ENCODE measurements at regions of chr1 and their contacts with region 1.

Region 1: DNA sequence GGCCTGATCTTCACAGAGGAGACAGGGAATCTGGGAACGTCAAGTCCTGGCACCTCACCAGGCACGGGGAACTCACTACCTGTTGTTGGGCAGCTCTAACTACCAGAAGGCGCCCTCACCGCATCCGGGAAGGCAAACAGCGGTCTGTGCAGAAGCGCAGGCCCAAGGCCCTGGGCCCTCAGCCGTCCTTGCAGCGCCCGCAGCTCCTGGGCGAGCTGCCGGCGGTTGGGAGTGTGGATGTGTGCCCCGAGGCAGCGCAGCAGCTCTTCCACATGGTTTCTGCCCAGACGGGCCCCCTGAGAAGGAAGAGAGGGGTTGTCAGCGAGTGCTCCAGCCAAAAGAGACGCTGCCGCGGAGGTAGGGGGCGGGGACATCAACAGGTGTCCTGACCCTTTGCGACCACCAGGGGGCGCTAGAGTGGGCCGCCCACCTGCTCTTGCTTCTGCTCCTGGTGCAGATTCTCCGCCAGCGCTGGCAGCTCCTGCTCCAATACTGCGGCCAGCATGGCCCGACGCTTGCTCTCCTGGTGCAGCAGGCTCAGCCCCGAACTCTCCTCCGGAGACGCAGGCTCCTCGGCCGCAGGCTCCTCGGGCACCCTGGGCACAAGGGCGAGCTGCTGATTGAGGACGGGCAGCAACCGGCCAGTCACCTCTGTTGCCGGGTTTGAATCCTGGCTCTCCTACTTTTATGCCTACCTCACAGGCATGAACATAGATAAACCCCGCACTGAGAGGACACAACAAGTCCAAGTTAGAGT is 9.3 kb downstream of the MAP3K6 start:
- DNase-seq: peak; percentile 80
- ATAC-seq: peak; percentile 66
- H3K4me3 Mint-ChIP-seq: peak overlapping the region; percentile 76
- H3K27ac Mint-ChIP-seq: peak overlapping the region; percentile 56
- H3K4me1 Mint-ChIP-seq: peaks cover 46% of the 10 kb centered on the region
- H3K27me3 Mint-ChIP-seq: no peaks in the 10 kb centered on the region
- CTCF ChIP-seq: peak; percentile 69

Region 2: DNA sequence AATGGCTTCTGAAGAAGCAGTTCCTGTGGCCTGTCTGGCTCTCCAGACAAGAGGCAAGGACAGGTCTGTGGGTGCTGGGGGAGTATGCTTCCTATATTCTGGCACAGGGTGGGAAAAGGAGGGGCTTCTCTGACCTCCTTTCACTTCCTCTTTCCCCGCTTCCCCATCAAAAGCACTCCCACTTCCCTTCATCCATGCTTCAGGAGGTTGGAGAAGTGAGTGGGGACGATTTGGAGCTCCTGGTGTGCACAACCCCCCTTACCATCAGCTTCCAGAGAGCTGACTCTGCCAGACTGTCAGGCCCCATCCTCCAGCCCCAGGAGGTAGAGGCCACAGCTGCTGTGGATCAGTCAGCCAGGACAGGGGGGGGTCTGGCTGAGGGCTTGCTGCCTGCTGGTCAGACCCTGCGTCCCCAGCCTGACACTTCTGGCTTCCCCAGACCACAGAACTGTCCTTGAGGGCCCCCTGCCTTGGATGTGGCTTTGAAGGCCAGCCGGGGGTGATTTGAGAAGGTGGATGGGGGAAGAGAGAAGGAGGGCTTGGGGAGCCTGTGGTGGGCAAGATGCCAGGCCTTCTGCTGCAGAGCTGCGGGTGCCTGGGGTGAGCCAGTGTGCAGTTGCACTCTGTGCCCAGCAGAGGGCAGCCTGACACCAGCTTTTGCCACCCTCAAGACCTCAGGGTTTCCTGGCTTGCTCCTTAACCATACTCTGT is 57.0 kb before region 1 on chr1:
- CTCF ChIA-PET with region 1: interaction called, 9 read pairs
- POLR2A ChIA-PET with region 1: no interaction called
- intact Hi-C with region 1: loop called (anchors 1 kb)
- DNase-seq: peak; percentile 72
- ATAC-seq: peak; percentile 90
- H3K4me3 Mint-ChIP-seq: no peak overlapping the region
- H3K27ac Mint-ChIP-seq: no peak overlapping the region
- H3K4me1 Mint-ChIP-seq: peaks cover 3% of the 10 kb centered on the region
- H3K27me3 Mint-ChIP-seq: no peaks in the 10 kb centered on the region
- CTCF ChIP-seq: peak; percentile 99

Region 3: GRCh38 chr1:27332536-27333281 is 24.8 kb before region 1 on chr1:
- CTCF ChIA-PET with region 1: interaction called, 20 read pairs
- POLR2A ChIA-PET with region 1: interaction called, 8 read pairs
- intact Hi-C with region 1: loop called (anchors 2 kb)
- DNase-seq: peak; percentile 49
- ATAC-seq: peak; percentile 92
- H3K4me3 Mint-ChIP-seq: no peak overlapping the region
- H3K27ac Mint-ChIP-seq: no peak overlapping the region
- H3K4me1 Mint-ChIP-seq: peaks cover 34% of the 10 kb centered on the region
- H3K27me3 Mint-ChIP-seq: no peaks in the 10 kb centered on the region
- CTCF ChIP-seq: no peak

Region 4: GRCh38 chr1:27372808-27373690 is 15.6 kb after region 1 on chr1:
- CTCF ChIA-PET with region 1: interaction called, 6 read pairs
- POLR2A ChIA-PET with region 1: interaction called, 6 read pairs
- intact Hi-C with region 1: loop called (anchors 1 kb)
- DNase-seq: no peak
- ATAC-seq: no peak
- H3K4me3 Mint-ChIP-seq: no peak overlapping the region
- H3K27ac Mint-ChIP-seq: no peak overlapping the region
- H3K4me1 Mint-ChIP-seq: peaks cover 40% of the 10 kb centered on the region
- H3K27me3 Mint-ChIP-seq: no peaks in the 10 kb centered on the region
- CTCF ChIP-seq: no peak

Region 5: DNA sequence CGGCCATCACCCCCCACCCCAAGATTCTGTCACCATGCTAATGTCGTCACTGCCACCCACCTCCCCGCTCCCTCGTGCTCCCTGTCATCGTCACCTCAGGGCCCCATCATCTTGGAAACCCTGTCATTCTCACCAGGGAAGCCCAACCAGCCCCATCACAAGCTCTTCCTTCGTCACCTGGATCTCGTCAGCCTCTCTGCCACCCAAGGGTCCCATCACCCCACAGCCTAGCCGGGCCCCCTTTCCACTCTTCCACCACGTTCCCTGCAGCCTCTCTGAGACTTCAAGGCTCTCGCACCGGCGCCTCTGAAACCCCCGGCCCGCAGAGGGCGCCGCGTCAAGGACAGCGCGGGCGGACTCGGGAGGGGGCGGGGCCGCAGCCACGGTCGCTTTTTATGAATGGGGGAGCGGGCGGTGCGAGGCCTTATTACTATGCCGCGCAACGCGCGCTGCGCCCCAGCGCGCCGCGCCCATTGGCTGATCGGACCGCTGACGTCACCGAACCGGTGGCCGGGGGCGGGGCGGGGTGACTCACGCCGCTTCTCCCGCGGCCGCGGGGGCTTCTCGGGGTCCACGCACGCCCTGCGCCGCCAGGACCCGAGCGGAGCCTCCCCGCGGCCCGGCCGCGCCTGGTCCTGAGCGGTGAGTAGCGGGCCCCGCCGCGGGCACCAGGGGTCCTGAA is 34.8 kb after region 1 on chr1 and contains the start of gene GPR3:
- CTCF ChIA-PET with region 1: interaction called, 43 read pairs
- POLR2A ChIA-PET with region 1: no interaction called
- intact Hi-C with region 1: loop called (anchors 1 kb)
- DNase-seq: peak; percentile 91
- ATAC-seq: peak; percentile 91
- H3K4me3 Mint-ChIP-seq: peak within 1 kb of the TSS; percentile 82
- H3K27ac Mint-ChIP-seq: peak within 1 kb of the TSS; percentile 60
- H3K4me1 Mint-ChIP-seq: peaks cover 18% of the 10 kb centered on the region
- H3K27me3 Mint-ChIP-seq: no peaks in the 10 kb centered on the region
- CTCF ChIP-seq: no peak
- total RNA-seq, gene GPR3: 0.11 TPM in 1 of 2 replicates, not detected in the other

Region 6: GRCh38 chr1:27525296-27526272 is 168.1 kb after region 1 on chr1:
- CTCF ChIA-PET with region 1: no interaction called
- POLR2A ChIA-PET with region 1: no interaction called
- intact Hi-C with region 1: no loop called
- DNase-seq: peak; percentile 51
- ATAC-seq: peak; percentile 64
- H3K4me3 Mint-ChIP-seq: peak overlapping the region; percentile 41
- H3K27ac Mint-ChIP-seq: peak overlapping the region; percentile 79
- H3K4me1 Mint-ChIP-seq: peaks cover 76% of the 10 kb centered on the region
- H3K27me3 Mint-ChIP-seq: no peaks in the 10 kb centered on the region
- CTCF ChIP-seq: no peak

Measured in activated B cell treated with CpG ODN at 0.5 μM for 24 hours (primary cell).